Gastrocnemius medialis (tissue), 4 donors: ENCODE measurements at regions of chr3 and their contacts with region 1.

Region 1: DNA sequence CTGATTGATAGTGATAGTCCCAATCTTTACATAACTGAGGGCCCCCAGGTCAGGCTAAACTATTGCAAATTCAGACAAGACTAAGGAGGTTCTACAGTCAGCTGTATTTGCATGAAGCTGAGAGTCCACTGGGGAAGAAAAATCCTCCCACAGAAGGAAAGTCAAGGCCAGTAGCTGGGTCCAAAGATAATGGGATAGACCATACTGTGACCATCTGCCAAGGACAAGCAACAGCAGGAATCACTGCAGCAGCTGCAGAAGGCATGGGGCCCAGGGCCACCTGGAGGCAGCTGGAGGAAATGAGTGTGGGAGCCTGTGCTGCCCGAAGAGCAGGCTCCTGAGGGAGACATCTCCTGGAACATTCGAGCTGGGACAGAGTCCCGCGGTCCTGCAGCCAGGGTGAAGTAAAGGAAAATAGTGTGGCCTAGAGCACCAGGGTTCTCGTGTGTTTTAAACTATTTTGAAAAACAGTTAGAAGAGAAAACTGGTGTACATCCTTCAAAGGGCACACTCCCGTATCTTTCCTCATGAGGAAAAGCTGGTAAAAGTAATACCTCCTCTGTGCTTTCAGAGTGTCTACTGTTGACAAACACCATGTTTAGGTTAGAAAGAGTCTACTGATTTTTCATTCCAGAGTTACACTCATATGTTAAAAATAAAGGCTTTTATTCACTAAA is 13.2 kb upstream of the TMEM212 start:
- DNase-seq: peak; percentile 46 to 64
- ATAC-seq: peak; percentile 57 to 60
- H3K4me3 ChIP-seq: no peak overlapping the region
- H3K27ac ChIP-seq: peak overlapping the region; percentile 50 to 61 (median 54)
- H3K4me1 ChIP-seq: peaks cover 13 to 27% of the 10 kb centered on the region in 2 donors
- H3K27me3 ChIP-seq: no peaks in the 10 kb centered on the region
- CTCF ChIP-seq: peak; percentile 14 to 60 (median 40)
- POLR2A ChIP-seq: no peak

Region 2: GRCh38 chr3:170802164-170803151 is 1027.5 kb before region 1 on chr3:
- in situ Hi-C with region 1: no loop called
- intact Hi-C with region 1: no loop called
- DNase-seq: no peak
- ATAC-seq: peak in 1 of 2 donors; percentile 55
- H3K4me3 ChIP-seq: no peak overlapping the region
- H3K27ac ChIP-seq: no peak overlapping the region
- H3K4me1 ChIP-seq: no peaks in the 10 kb centered on the region
- H3K27me3 ChIP-seq: no peaks in the 10 kb centered on the region
- CTCF ChIP-seq: no peak
- POLR2A ChIP-seq: no peak

Region 3: DNA sequence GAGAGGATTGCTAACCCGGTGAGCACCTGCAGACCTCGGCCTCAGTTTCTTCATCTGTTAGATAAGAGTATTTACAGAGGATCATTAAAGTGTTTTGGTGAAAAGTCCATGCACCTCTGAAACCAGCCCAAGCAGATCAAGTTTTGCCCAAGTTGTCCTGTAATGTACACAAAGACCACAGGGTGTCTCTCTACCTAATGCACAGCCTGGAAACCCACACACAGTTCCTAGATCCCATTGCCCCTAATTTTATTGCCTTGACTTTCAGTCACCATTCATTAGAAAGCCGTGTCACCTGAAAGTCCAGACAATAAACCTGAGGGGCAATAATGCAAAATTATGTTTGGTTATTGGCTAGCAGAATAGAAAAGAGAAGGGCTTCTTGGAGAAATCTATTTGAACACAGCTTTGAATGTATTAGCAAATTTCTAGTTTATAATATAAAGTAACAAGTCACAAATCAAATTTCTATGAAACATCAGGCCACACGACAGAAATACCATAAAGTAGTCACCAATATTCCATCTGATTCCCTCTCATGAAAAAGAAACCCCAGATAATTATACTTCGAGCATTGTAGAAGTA is 642.2 kb before region 1 on chr3:
- in situ Hi-C with region 1: no loop called
- intact Hi-C with region 1: loop called (anchors 10 kb)
- DNase-seq: no peak
- ATAC-seq: peak; percentile 82 to 88
- H3K4me3 ChIP-seq: no peak overlapping the region
- H3K27ac ChIP-seq: no peak overlapping the region
- H3K4me1 ChIP-seq: peaks cover 21 to 38% of the 10 kb centered on the region in 2 donors
- H3K27me3 ChIP-seq: no peaks in the 10 kb centered on the region
- CTCF ChIP-seq: peak; percentile 53 to 64 (median 63)
- POLR2A ChIP-seq: no peak

Region 4: GRCh38 chr3:171269542-171269941 is 560.4 kb before region 1 on chr3:
- in situ Hi-C with region 1: no loop called
- intact Hi-C with region 1: no loop called
- DNase-seq: no peak
- ATAC-seq: peak in 1 of 2 donors; percentile 53
- H3K4me3 ChIP-seq: peak overlapping the region in 1 of 4 donors; percentile 7
- H3K27ac ChIP-seq: peak overlapping the region in 2 of 4 donors; percentile 21 to 49
- H3K4me1 ChIP-seq: peaks cover 19 to 36% of the 10 kb centered on the region in 2 donors
- H3K27me3 ChIP-seq: no peaks in the 10 kb centered on the region
- CTCF ChIP-seq: no peak
- POLR2A ChIP-seq: no peak

Region 5: DNA sequence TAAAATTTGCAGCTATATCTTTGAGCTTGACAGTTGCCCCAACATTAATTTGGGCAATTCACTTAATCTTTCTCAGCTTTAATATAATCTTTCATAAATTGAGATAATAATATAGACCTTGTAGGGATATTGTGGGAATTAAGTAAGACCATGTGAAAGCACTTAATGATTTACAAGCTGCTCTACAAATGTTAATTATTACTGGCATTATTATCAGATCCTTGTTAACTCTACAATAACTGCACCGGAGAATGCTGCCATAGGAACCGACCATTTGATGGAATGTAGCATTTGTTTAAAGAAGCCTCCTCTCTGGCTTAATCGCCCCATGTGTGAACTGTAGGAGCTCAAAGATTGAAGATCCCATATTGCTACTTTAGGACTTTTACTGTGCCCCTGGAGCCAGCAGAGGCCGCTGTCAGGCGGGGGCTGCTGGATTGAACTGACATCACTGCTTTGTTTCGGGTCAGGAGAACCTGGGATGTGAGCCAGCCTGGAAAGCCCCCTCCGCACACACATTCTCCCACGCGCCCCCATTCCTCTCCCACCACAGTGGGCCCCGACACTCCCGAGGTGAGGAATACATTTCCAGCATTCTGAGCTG is 215.6 kb before region 1 on chr3:
- in situ Hi-C with region 1: no loop called
- intact Hi-C with region 1: loop called (anchors 1 kb)
- DNase-seq: no peak
- ATAC-seq: no peak
- H3K4me3 ChIP-seq: no peak overlapping the region
- H3K27ac ChIP-seq: no peak overlapping the region
- H3K4me1 ChIP-seq: no peaks in the 10 kb centered on the region
- H3K27me3 ChIP-seq: no peaks in the 10 kb centered on the region
- CTCF ChIP-seq: peak in 3 of 5 experiments; percentile 32 to 51 (median 36)
- POLR2A ChIP-seq: no peak

Region 6: GRCh38 chr3:171646357-171647133 is 183.4 kb before region 1 on chr3:
- in situ Hi-C with region 1: loop called in 3 of 4 experiments (anchors 10 to 25 kb)
- intact Hi-C with region 1: loop called (anchors 1 kb)
- DNase-seq: no peak
- ATAC-seq: peak; percentile 55 to 69
- H3K4me3 ChIP-seq: no peak overlapping the region
- H3K27ac ChIP-seq: peak overlapping the region in 2 of 4 donors; percentile 3 to 21
- H3K4me1 ChIP-seq: peaks cover 5 to 6% of the 10 kb centered on the region in 2 donors
- H3K27me3 ChIP-seq: no peaks in the 10 kb centered on the region
- CTCF ChIP-seq: peak; percentile 35 to 68 (median 39)
- POLR2A ChIP-seq: no peak

Region 7: GRCh38 chr3:171772427-171773056 is 57.4 kb before region 1 on chr3:
- in situ Hi-C with region 1: no loop called
- intact Hi-C with region 1: loop called (anchors 5 kb)
- DNase-seq: peak in 1 of 2 donors; percentile 28
- ATAC-seq: peak in 1 of 2 donors; percentile 46
- H3K4me3 ChIP-seq: no peak overlapping the region
- H3K27ac ChIP-seq: no peak overlapping the region
- H3K4me1 ChIP-seq: peaks cover 0 to 5% of the 10 kb centered on the region in 2 donors
- H3K27me3 ChIP-seq: no peaks in the 10 kb centered on the region
- CTCF ChIP-seq: peak; percentile 35 to 62 (median 46)
- POLR2A ChIP-seq: no peak

Region 8: DNA sequence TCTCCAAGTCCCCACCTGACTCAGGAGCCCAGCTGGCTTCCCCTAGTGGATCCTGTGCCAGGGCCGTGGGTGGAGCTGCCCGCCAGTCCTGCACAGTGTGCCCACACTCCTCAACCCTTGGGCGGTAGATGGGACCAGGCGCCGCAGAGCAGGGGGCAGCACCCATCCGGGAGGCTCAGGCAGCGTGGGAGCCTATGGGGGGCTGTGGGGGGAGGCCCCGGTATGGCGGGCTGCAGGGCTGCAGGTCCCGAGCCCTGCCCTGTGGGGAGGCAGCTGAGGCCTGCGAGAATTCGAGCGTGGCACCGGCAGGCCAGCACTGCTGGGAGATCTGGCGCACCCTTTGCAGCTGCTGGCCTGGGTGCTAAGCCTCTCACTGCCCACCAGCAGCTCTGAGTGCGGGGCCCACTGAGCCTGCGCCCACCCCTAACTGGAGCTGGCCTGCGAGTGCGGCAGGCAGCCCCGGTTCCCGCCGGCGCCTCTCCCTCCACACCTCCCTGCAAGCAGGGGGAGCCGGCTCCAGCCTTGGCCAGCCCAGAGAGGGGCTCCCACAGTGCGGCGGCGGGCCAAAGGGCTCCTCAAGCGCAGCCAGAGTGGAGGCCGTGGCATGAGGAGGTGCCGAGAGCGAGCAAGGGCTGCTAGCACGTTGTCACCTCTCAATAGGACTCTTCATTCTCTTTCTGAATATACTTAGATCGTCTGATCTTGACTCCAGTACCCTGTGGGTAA is 77.1 kb after region 1 on chr3:
- in situ Hi-C with region 1: no loop called
- intact Hi-C with region 1: no loop called
- DNase-seq: no peak
- ATAC-seq: no peak
- H3K4me3 ChIP-seq: no peak overlapping the region
- H3K27ac ChIP-seq: no peak overlapping the region
- H3K4me1 ChIP-seq: no peaks in the 10 kb centered on the region
- H3K27me3 ChIP-seq: no peaks in the 10 kb centered on the region
- CTCF ChIP-seq: no peak
- POLR2A ChIP-seq: no peak

Region 9: DNA sequence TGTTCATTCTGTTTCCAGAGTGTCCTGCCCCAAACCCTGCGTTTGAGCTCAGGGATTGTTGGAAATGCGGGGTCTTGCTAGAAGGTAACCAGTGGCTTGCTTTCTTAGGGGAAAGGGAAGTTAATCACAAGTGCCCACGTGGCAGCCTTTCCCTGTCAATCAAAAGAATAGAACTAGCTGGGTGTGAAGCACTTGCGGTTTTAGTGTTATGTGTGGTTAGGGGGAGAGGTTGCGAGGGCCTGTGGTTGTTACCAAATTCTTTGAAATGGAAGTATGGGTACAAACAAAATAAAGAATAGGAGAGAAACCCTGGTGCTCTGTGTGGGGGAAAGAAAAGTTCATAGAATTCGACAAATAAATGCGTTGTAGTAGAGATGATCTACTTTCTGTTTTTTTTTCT is 277.0 kb after region 1 on chr3:
- in situ Hi-C with region 1: no loop called
- intact Hi-C with region 1: no loop called
- DNase-seq: peak; percentile 30 to 37
- ATAC-seq: no peak
- H3K4me3 ChIP-seq: no peak overlapping the region
- H3K27ac ChIP-seq: peak overlapping the region in 3 of 4 donors; percentile 2 to 26 (median 23)
- H3K4me1 ChIP-seq: peaks cover 52 to 59% of the 10 kb centered on the region in 2 donors
- H3K27me3 ChIP-seq: no peaks in the 10 kb centered on the region
- CTCF ChIP-seq: no peak
- POLR2A ChIP-seq: no peak

Region 10: GRCh38 chr3:172332256-172333041 is 502.5 kb after region 1 on chr3:
- in situ Hi-C with region 1: loop called in 2 of 4 experiments (anchors 25 kb)
- intact Hi-C with region 1: no loop called
- DNase-seq: peak in 1 of 2 donors; percentile 48
- ATAC-seq: peak; percentile 68 to 85
- H3K4me3 ChIP-seq: no peak overlapping the region
- H3K27ac ChIP-seq: peak overlapping the region; percentile 10 to 53 (median 31)
- H3K4me1 ChIP-seq: no peaks in the 10 kb centered on the region
- H3K27me3 ChIP-seq: no peaks in the 10 kb centered on the region
- CTCF ChIP-seq: peak; percentile 72 to 90 (median 82)
- POLR2A ChIP-seq: no peak